ENCODE measurements at regions of chr1 and their contacts with region 1.

Region 1: DNA sequence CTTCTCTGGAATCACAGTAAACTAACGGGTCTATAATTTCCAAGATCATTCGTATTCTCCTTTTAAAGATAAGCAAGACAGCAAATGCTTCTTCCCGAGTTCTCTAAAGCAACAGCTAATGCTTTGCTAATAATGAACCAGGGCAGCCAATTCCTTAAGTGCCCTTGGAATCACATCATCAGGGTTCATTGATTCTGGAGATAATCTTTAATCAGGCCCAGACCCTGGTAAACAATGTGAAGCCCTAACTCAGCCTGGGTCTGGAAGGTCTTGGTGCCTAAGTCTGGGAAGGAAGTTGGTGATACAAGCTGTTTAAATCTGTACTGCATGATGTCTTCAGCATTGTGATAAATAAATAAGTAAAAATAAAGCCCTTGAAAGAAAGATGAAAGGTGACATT is 18.4 kb downstream of the ERI3 start:
- DNase-seq: no peak
- ATAC-seq: no peak
- H3K4me3 ChIP-seq: no peak overlapping the region
- H3K4me3 Mint-ChIP-seq: no peak overlapping the region
- H3K27ac ChIP-seq: no peak overlapping the region
- H3K27ac Mint-ChIP-seq: no peak overlapping the region
- H3K4me1 ChIP-seq: no peaks in the 10 kb centered on the region
- H3K4me1 Mint-ChIP-seq: peaks cover 3% of the 10 kb centered on the region
- H3K27me3 ChIP-seq: no peaks in the 10 kb centered on the region
- H3K27me3 Mint-ChIP-seq: no peaks in the 10 kb centered on the region
- CTCF ChIP-seq: no peak

Region 2: GRCh38 chr1:44135886-44136285 is 200.8 kb before region 1 on chr1:
- CTCF ChIA-PET with region 1: no interaction called
- POLR2A ChIA-PET with region 1: no interaction called
- intact Hi-C with region 1: no loop called
- DNase-seq: no peak
- ATAC-seq: no peak
- H3K4me3 ChIP-seq: no peak overlapping the region
- H3K4me3 Mint-ChIP-seq: no peak overlapping the region
- H3K27ac ChIP-seq: no peak overlapping the region
- H3K27ac Mint-ChIP-seq: no peak overlapping the region
- H3K4me1 ChIP-seq: no peaks in the 10 kb centered on the region
- H3K4me1 Mint-ChIP-seq: no peaks in the 10 kb centered on the region
- H3K27me3 ChIP-seq: no peaks in the 10 kb centered on the region
- H3K27me3 Mint-ChIP-seq: peaks cover 16% of the 10 kb centered on the region
- CTCF ChIP-seq: no peak

Region 3: DNA sequence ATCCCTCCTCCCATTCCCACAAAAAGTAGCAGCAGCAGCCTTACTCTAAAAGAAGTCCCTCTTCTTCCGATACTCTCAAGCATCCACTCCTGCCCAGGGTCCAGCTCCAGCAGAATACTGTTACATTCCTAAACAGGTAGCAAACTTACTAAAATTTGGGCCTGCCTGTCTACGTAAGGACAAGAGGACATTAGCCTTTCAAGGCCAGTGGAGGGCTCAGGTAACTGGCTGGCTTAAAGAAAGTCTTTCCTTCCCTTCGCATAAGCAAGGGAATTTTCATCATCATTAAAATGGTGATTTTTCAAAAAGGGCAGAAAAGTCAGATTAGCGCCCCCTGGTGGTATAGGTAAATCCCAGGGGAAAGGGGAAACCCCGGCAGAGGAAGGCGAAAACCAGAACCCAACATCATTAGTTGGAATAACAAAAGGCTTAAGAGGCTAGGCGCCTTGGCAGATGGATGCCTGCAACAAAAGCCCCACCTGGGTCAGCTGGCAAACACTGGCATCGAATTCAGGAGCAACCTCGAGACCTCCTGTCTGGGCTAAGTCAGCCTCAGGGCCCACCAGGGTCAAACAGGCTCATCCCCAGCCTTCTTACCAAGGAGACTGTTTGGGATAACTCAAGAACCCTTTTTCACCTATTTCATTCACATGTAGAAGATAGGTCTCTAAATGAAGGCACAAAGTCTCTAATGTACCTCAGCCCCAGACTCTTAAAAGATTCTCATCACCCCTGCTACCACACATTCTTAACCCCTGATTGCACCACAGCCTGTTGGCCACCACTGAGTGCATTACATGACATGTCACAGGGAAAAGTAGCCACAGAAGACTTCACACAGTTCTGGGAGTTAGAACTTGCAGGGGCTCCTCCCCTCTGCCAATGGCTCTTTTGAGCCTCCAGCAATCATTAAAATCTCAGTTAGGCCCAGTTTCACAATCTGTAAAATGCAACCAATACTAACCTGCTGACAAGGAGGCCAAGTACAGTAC is 18.3 kb before region 1 on chr1:
- CTCF ChIA-PET with region 1: interaction called, 12 read pairs
- POLR2A ChIA-PET with region 1: no interaction called
- intact Hi-C with region 1: no loop called
- DNase-seq: peak in 8 of 9 experiments; percentile 12 to 67 (median 50)
- ATAC-seq: no peak
- H3K4me3 ChIP-seq: no peak overlapping the region
- H3K4me3 Mint-ChIP-seq: no peak overlapping the region
- H3K27ac ChIP-seq: no peak overlapping the region
- H3K27ac Mint-ChIP-seq: no peak overlapping the region
- H3K4me1 ChIP-seq: no peaks in the 10 kb centered on the region
- H3K4me1 Mint-ChIP-seq: peaks cover 5% of the 10 kb centered on the region
- H3K27me3 ChIP-seq: no peaks in the 10 kb centered on the region
- H3K27me3 Mint-ChIP-seq: no peaks in the 10 kb centered on the region
- CTCF ChIP-seq: peak; percentile 89